IMR-90 (cell line): ENCODE measurements at regions of chr22 and their contacts with region 1.

Region 1: DNA sequence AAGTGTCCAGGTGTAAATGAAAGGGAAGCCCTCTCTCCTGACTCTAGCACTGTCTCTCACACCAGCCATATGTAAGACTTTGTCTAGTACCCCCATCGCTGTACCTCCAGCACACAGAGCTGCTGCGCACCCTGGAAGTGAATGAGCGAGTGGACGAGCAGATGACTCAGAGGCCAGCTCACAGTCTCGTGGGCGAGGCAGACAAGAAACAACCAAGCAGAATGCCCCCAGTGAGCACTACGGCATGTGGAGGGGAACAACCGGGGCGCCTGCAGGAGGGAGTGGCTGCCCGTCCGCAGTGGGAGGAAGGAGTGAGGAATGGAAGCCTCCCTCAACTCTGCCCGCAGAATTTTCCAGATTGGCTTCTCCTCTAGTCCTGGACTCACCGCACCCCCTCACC is 46.4 kb downstream of the MCM5 start:
- DNase-seq: peak; percentile 95
- ATAC-seq: peak; percentile 98
- H3K4me3 ChIP-seq: no peak overlapping the region
- H3K27ac ChIP-seq: peak overlapping the region; percentile 66
- H3K4me1 ChIP-seq: peaks cover 21% of the 10 kb centered on the region
- H3K27me3 ChIP-seq: no peaks in the 10 kb centered on the region
- CTCF ChIP-seq: no peak
- POLR2A ChIP-seq: no peak
- RAD21 ChIP-seq: no peak; the same call in 1 of the 2 replicates

Region 2: GRCh38 chr22:35458547-35459422 is 12.4 kb after region 1 on chr22:
- CTCF ChIA-PET with region 1: no interaction called
- POLR2A ChIA-PET with region 1: no interaction called
- dilution Hi-C with region 1: no loop called
- in situ Hi-C with region 1: no loop called
- intact Hi-C with region 1: no loop called
- DNase-seq: no peak
- ATAC-seq: no peak
- H3K4me3 ChIP-seq: no peak overlapping the region
- H3K27ac ChIP-seq: no peak overlapping the region
- H3K4me1 ChIP-seq: peaks cover 3% of the 10 kb centered on the region; the same call in 1 of the 2 replicates
- H3K27me3 ChIP-seq: peaks cover 8% of the 10 kb centered on the region; the same call in 1 of the 2 replicates
- CTCF ChIP-seq: no peak
- POLR2A ChIP-seq: no peak
- RAD21 ChIP-seq: no peak

Region 3: DNA sequence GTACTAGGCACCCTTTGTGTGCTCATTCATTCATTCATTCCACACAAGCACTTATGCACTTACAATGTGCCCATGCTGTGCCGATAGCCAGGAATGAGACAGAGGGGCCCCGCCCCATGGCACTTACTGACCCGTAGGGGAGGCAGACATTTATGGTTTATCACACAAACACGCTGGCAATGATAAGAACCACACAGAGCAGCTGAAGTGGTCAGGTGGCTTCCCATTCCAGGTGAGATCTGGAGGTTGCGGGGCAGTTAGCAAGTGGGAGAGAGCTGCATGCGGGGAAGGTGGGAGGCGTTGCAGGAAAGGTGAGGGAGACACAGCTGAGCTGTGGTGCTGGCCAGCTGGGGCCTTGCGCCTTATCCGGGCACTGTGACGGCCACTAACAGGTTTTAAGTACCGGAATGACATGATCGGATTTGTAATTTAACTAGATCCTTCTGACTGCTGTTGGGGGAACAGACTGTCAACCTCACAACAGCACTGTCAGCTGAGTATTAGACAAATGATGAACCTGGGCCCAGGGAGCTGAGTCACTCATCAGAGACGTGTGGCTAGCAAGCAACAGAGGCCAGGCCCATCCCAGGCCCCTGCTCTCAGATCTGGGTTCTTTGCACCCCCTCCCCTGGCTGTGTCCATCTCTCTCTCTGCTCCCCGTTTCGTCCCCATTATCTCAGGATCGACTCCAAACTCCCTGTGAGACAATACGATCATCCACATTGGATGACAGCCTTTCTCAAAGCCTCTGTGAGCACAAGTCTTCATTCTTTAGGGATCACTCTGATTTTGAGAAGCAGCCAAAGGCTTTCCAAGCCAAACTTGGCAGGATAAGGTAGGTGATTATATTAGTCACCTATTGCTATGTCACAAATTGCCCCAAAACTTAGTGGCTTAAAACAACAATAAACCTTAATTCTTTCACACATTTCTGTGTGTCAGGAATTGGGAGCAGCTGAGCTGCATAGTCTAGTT is 122.7 kb after region 1 on chr22:
- CTCF ChIA-PET with region 1: no interaction called
- POLR2A ChIA-PET with region 1: no interaction called
- dilution Hi-C with region 1: no loop called
- in situ Hi-C with region 1: no loop called
- intact Hi-C with region 1: loop called (anchors 5 kb)
- DNase-seq: peak; percentile 79
- ATAC-seq: peak; percentile 65
- H3K4me3 ChIP-seq: no peak overlapping the region
- H3K27ac ChIP-seq: peak overlapping the region; percentile 21; the same call in 1 of the 2 replicates
- H3K4me1 ChIP-seq: peaks cover 25% of the 10 kb centered on the region
- H3K27me3 ChIP-seq: peaks cover 2% of the 10 kb centered on the region; the same call in 1 of the 2 replicates
- CTCF ChIP-seq: no peak
- POLR2A ChIP-seq: no peak
- RAD21 ChIP-seq: no peak